ENCODE measurements at regions of chr2 and their contacts with region 1.

Region 1: DNA sequence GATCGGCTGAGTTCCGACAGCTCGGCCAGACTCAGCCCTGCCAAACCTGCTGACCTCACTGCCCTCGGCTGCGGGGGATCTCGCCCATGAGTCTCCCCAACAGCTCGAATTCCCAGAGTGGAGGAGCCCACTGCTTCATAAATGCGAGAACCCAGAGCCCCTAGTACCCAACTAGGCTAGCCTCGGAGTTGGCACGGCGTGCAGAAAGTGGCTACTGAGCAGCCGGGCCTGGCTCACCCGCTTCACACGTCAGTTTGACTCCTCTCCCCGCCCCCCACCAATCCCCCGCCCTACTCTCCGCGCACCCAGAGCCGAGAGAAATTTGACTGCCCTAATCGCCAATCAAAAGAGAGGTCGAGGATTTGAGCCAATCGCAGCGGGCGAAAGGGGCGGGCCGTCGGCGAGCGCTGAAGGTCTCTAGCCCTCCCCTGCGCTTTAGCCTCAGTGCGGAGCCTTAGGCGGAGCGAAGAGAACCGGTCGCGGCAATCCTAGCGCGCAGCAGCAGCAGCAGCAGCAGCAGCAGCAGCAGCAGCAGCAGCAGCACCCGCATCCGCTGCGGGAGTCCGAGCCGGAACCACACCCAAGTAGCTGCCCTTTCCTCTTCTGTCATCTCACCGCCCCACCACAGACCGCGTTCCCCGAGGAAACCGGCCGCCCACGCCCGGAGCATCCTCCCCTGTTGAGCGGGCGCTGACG is at the start of gene GLS:
- DNase-seq: peak; percentile 98
- H3K4me3 Mint-ChIP-seq: peak within 1 kb of the TSS; percentile 94
- H3K27ac Mint-ChIP-seq: peak within 1 kb of the TSS; percentile 97
- H3K4me1 Mint-ChIP-seq: peaks cover 35% of the 10 kb centered on the region
- H3K27me3 Mint-ChIP-seq: peaks cover 2% of the 10 kb centered on the region
- total RNA-seq, gene GLS: 256 and 266 TPM in 2 replicates

Region 2: DNA sequence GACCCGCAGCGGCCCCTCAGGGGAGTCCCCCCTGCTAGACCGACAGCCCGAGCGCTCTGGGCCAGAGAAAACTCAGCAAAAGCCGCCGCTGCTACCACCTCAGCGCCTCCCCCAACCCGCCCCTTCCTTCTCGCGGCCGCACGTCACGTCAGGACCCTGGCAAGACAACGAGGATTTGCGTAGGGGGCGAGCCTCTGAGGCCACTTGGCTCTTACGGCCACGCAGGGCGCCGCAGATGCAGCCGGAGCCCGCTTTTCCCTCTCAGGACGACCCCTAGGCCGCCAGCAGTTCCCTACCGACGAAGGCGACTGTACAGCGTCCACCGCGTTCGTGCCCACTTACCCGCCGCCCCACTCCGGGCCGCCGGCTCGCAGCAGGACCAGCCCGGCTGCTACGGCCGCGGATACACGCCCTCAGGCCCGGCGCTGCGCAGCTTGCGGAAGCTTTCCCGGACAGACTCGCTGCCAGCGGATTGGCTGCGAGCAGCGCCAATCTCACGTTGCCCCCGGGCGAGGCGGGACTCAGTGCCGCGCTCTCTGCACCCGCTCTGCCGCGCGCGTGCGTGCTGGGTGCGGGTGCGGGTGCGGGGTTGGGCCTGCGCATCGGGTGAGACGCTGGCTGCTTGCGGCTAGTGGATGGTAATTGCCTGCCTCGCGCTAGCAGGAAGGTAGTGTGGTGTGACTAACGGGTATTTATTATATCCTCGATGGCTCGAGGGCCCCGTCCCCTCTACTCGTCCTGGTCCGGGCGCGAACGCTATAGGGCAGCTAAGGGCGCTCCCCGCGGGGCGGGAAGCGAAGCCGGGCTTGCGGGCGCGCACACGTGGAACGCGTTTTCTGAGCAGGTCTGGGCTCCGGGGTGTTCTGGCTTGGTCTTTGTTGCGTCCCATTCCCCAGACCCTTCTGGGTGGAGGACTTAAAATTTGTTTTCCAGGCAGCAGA is 1096.3 kb before region 1 on chr2 and contains the starts of genes ORMDL1 and PMS1:
- intact Hi-C with region 1: loop called (anchors 10 kb)
- DNase-seq: peak; percentile 99
- H3K4me3 Mint-ChIP-seq: peak within 1 kb of the TSS; percentile 86
- H3K27ac Mint-ChIP-seq: peak within 1 kb of the TSS; percentile 86
- H3K4me1 Mint-ChIP-seq: peaks cover 37% of the 10 kb centered on the region
- H3K27me3 Mint-ChIP-seq: no peaks in the 10 kb centered on the region
- total RNA-seq, gene ORMDL1: 74.5 and 82.7 TPM in 2 replicates
- total RNA-seq, gene PMS1: 67.2 and 69.2 TPM in 2 replicates

Region 3: DNA sequence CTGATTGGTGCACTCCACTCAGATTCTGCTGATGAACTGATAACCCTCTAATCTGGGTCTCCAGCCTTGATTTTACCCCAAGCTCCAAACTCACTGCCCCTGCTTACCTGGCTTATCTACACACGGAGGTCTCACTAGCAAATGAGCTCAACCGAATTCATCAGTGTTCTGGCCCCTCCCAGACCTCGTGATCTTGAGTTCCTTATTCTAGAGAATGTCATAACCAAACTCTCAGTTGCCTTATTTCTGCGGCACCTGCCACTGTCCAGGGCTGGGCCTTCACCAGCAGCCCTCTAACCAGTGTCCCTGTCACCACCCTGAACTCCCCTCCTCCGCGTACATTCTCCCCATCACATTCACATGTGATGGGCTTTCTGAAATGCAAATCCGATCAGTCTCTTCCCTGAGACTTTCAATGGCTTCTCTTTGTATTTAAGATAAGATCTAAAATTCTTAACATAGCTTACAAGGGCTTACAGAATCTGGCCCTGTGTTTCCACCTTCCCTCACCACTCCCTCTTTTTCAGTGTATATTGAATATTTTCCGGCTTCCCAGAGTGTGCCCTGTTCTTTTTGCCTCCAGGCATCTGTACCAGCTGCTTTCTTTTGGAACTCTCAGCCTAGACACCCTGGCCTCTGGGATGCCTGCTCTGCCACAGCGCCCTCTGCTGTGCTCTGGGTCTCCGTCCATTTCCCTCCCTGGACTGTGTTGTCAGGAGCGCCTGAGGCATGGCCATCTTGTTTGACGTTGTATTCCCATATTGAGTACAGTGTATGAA is 200.5 kb before region 1 on chr2:
- intact Hi-C with region 1: loop called (anchors 1 kb)
- DNase-seq: peak; percentile 86
- H3K4me3 Mint-ChIP-seq: peak overlapping the region; percentile 49
- H3K27ac Mint-ChIP-seq: peak overlapping the region; percentile 91
- H3K4me1 Mint-ChIP-seq: peaks cover 48% of the 10 kb centered on the region
- H3K27me3 Mint-ChIP-seq: no peaks in the 10 kb centered on the region

Region 4: GRCh38 chr2:190819840-190820301 is 60.7 kb before region 1 on chr2:
- intact Hi-C with region 1: no loop called
- DNase-seq: no peak
- H3K4me3 Mint-ChIP-seq: no peak overlapping the region
- H3K27ac Mint-ChIP-seq: no peak overlapping the region
- H3K4me1 Mint-ChIP-seq: no peaks in the 10 kb centered on the region
- H3K27me3 Mint-ChIP-seq: no peaks in the 10 kb centered on the region

Region 5: DNA sequence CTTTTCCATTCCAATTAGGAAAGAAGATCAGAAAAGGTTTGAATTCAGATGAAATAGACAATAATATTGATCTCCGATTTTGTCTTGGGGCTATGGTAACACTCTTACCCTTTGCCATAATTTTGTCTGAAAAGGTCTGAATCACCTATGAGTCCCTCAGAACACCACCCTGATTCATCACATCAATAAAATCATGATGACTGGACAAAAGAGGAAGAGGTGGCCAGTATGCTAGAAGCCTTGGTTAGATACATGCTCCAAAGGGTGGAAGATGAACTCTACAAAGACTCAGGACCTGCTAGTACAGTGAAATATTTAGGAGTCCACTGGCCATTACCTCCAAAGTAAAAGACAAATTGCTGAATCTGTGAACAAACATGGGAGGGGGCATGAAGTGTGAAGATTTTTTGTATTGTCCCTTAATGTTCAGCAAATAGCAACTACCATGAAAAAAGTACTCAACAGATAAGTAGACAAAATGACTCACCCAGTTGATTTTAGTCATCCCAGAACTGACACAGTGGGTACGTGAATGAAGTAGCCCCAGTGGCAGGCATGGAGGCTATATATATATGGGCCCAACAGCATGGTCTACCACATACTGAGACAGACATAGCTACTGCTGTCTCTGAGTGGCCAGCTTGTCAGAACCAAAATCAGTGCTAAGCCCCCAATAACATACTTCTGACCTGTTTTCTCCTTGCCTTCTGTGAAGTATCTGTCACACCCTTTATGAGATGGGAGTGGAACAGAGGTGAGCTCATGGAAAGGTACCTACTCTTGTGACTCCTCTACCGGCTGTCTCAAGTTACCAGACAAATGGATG is 36.4 kb before region 1 on chr2:
- intact Hi-C with region 1: loop called (anchors 1 kb)
- DNase-seq: peak; percentile 72
- H3K4me3 Mint-ChIP-seq: peak overlapping the region; percentile 60
- H3K27ac Mint-ChIP-seq: peak overlapping the region; percentile 87
- H3K4me1 Mint-ChIP-seq: peaks cover 25% of the 10 kb centered on the region
- H3K27me3 Mint-ChIP-seq: no peaks in the 10 kb centered on the region

Region 6: DNA sequence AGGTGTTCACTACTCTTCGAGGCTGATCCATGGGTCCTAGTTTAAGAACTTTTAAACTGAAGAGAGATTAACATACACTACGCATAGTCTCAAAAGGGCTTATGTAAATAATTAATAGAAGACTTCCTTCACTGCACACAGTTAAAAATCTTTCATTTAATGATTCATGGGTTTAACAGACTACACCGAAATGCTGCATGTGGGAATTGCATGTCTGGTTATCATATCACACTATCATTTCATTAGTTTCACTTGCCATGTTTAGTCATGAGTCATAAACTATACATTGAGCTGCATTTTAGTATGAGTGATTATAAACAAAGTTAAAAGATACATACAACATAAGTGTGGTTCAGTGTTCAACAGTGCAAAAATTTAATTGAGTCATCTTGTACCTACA is 31.3 kb after region 1 on chr2:
- intact Hi-C with region 1: loop called (anchors 2 kb)
- DNase-seq: no peak
- H3K4me3 Mint-ChIP-seq: peak overlapping the region; percentile 9
- H3K27ac Mint-ChIP-seq: peak overlapping the region; percentile 74
- H3K4me1 Mint-ChIP-seq: peaks cover 25% of the 10 kb centered on the region
- H3K27me3 Mint-ChIP-seq: no peaks in the 10 kb centered on the region

Region 7: GRCh38 chr2:191114403-191114886 is 233.9 kb after region 1 on chr2:
- intact Hi-C with region 1: loop called (anchors 5 kb)
- DNase-seq: peak; percentile 82
- H3K4me3 Mint-ChIP-seq: peak overlapping the region; percentile 60
- H3K27ac Mint-ChIP-seq: peak overlapping the region; percentile 92
- H3K4me1 Mint-ChIP-seq: peaks cover 55% of the 10 kb centered on the region
- H3K27me3 Mint-ChIP-seq: no peaks in the 10 kb centered on the region

Measured in activated CD4-positive, alpha-beta T cell treated with anti-CD3 and anti-CD28 coated beads, Interleukin-2, amount 10 ng/mL, durations not matched to agents 24 days and 14 days (primary cell).